Mammary epithelial cell (primary cell): ENCODE measurements at regions of chr1 and their contacts with region 1.

Region 1: GRCh38 chr1:196738730-196739129 is 35.9 kb upstream of the CFHR3 start:
- DNase-seq: no peak
- H3K4me3 ChIP-seq: no peak overlapping the region
- H3K27ac ChIP-seq: no peak overlapping the region
- H3K4me1 ChIP-seq: no peaks in the 10 kb centered on the region
- H3K27me3 ChIP-seq: peaks cover 1% of the 10 kb centered on the region
- CTCF ChIP-seq: no peak

Region 2: GRCh38 chr1:197156691-197157090 is 418.0 kb after region 1 on chr1:
- CTCF ChIA-PET with region 1: no interaction called
- dilution Hi-C with region 1: no loop called
- in situ Hi-C with region 1: no loop called
- intact Hi-C with region 1: loop called (anchors 5 kb)
- DNase-seq: no peak
- H3K4me3 ChIP-seq: no peak overlapping the region
- H3K27ac ChIP-seq: no peak overlapping the region
- H3K4me1 ChIP-seq: no peaks in the 10 kb centered on the region
- H3K27me3 ChIP-seq: no peaks in the 10 kb centered on the region
- CTCF ChIP-seq: peak in 1 of 2 donors; percentile 33

Region 3: GRCh38 chr1:198056255-198056654 is 1317.5 kb after region 1 on chr1:
- CTCF ChIA-PET with region 1: no interaction called
- dilution Hi-C with region 1: no loop called
- in situ Hi-C with region 1: no loop called
- intact Hi-C with region 1: no loop called
- DNase-seq: no peak
- H3K4me3 ChIP-seq: no peak overlapping the region
- H3K27ac ChIP-seq: no peak overlapping the region
- H3K4me1 ChIP-seq: no peaks in the 10 kb centered on the region
- H3K27me3 ChIP-seq: no peaks in the 10 kb centered on the region
- CTCF ChIP-seq: peak; percentile 28 to 33